Psoas muscle (tissue), 8 donors: ENCODE measurements at regions of chr1 and their contacts with region 1.

Region 1: DNA sequence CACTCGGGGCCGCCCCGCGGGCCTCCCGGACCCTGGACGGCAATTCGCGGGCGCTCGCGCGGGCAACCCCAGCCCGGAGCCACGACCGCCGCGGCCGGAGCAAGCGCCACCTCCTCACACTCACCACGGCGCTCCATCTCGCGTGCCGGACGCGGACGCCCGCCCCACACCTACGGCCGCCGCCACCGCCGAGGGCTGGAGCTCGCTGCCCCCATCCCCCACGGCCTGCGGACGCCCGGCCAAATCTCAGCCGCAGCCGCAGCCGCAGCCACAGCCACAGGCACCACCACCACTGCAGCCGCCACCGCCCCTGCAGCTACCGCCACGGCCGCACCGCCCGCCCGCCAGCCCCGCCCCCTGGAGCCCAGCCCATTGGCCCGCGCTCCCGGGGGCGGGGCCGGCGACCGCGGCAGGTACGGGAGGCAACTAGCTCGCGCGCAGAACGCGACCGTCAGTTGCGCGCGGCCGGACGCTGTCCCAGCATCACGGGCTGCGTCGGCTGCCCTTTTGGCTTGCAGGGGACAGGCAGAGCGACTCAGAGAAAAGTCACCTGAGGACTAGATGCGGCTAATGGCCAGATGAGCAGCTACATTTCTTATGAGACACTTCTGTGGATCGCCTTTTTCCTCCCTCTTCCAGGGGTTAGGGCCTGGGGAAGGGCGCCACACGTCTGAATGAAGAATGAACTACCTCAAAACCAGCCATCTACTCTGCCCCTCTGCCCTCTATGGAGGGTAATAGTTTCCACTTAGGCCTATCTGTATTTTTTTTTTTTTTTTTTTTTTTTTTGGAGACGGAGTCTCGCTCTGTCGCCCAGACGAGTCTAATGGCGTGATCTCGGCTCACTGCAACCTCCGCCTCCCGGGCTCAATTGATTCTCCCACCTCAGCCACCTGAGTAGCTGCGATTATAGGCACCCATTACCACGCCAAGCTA is at the start of gene ARHGAP29:
- DNase-seq: peak; percentile 82 to 92
- ATAC-seq: peak; percentile 93 to 96 (median 96)
- H3K4me3 ChIP-seq: peak within 1 kb of the TSS; percentile 84
- H3K27ac ChIP-seq: peak within 1 kb of the TSS; percentile 95
- H3K4me1 ChIP-seq: peaks cover 10% of the 10 kb centered on the region
- H3K27me3 ChIP-seq: no peaks in the 10 kb centered on the region
- CTCF ChIP-seq: peak; percentile 1
- total RNA-seq, gene ARHGAP29: 11.8 to 20.0 (median 15.7) TPM

Region 2: GRCh38 chr1:94045465-94046056 is 192.0 kb before region 1 on chr1:
- intact Hi-C with region 1: loop called in 1 of 2 experiments (anchors 5 kb)
- DNase-seq: peak; percentile 84 to 91
- ATAC-seq: peak; percentile 71 to 91 (median 89)
- H3K4me3 ChIP-seq: peak overlapping the region; percentile 15
- H3K27ac ChIP-seq: peak overlapping the region; percentile 80
- H3K4me1 ChIP-seq: no peaks in the 10 kb centered on the region
- H3K27me3 ChIP-seq: no peaks in the 10 kb centered on the region
- CTCF ChIP-seq: peak; percentile 56

Region 3: GRCh38 chr1:94180650-94181049 is 56.9 kb before region 1 on chr1:
- intact Hi-C with region 1: no loop called
- DNase-seq: no peak
- ATAC-seq: no peak
- H3K4me3 ChIP-seq: no peak overlapping the region
- H3K27ac ChIP-seq: no peak overlapping the region
- H3K4me1 ChIP-seq: no peaks in the 10 kb centered on the region
- H3K27me3 ChIP-seq: no peaks in the 10 kb centered on the region
- CTCF ChIP-seq: no peak

Region 4: GRCh38 chr1:94329986-94330385 is 92.4 kb after region 1 on chr1:
- intact Hi-C with region 1: loop called (anchors 2 to 5 kb)
- DNase-seq: no peak
- ATAC-seq: no peak
- H3K4me3 ChIP-seq: no peak overlapping the region
- H3K27ac ChIP-seq: no peak overlapping the region
- H3K4me1 ChIP-seq: peaks cover 42% of the 10 kb centered on the region
- H3K27me3 ChIP-seq: no peaks in the 10 kb centered on the region
- CTCF ChIP-seq: no peak

Region 5: GRCh38 chr1:94417978-94418663 is 180.6 kb after region 1 on chr1 and contains the start of gene ABCD3:
- intact Hi-C with region 1: loop called (anchors 10 kb)
- DNase-seq: peak; percentile 98 to 99
- ATAC-seq: peak; percentile 97 to 99 (median 98)
- H3K4me3 ChIP-seq: peak within 1 kb of the TSS; percentile 97
- H3K27ac ChIP-seq: peak within 1 kb of the TSS; percentile 84
- H3K4me1 ChIP-seq: peaks cover 32% of the 10 kb centered on the region
- H3K27me3 ChIP-seq: no peaks in the 10 kb centered on the region
- CTCF ChIP-seq: no peak
- total RNA-seq, gene ABCD3: 34.4 to 48.5 (median 40.1) TPM